PC-3 (cell line): ENCODE measurements at regions of chr12 and their contacts with region 1.

Region 1: DNA sequence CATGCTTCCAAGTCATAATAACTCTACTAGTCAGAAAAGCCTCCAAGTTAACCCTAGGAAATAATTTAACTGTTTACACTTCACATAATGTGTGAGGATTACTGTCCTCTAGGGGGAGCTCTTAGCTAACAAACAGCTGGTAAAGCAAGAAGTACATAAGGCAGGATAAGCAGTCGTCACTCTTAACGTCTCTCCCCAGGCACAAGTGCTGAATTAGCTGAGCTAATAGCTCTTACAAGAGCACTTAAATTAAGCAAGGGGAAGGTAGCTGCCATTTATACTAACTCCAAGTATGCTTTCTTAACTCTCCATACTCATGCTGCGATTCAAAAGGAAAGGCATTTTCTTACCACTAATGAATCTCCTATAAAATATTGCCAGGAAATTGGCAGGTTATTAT is 79.3 kb upstream of the TSPAN11 start:
- DNase-seq: peak; percentile 76
- ATAC-seq: peak; percentile 57
- H3K4me3 ChIP-seq: no peak overlapping the region
- H3K27ac ChIP-seq: no peak overlapping the region
- H3K4me1 ChIP-seq: no peaks in the 10 kb centered on the region; the same call in 1 of the 2 replicates
- H3K27me3 ChIP-seq: no peaks in the 10 kb centered on the region
- CTCF ChIP-seq: peak; percentile 74

Region 2: GRCh38 chr12:30679241-30679640 is 168.0 kb before region 1 on chr12:
- CTCF ChIA-PET with region 1: interaction called, 13 read pairs
- POLR2A ChIA-PET with region 1: no interaction called
- intact Hi-C with region 1: no loop called
- DNase-seq: no peak
- ATAC-seq: no peak
- H3K4me3 ChIP-seq: no peak overlapping the region
- H3K27ac ChIP-seq: no peak overlapping the region
- H3K4me1 ChIP-seq: no peaks in the 10 kb centered on the region
- H3K27me3 ChIP-seq: no peaks in the 10 kb centered on the region
- CTCF ChIP-seq: no peak

Region 3: GRCh38 chr12:30965613-30965985 is 118.3 kb after region 1 on chr12:
- CTCF ChIA-PET with region 1: no interaction called
- POLR2A ChIA-PET with region 1: no interaction called
- intact Hi-C with region 1: loop called (anchors 5 kb)
- DNase-seq: peak; percentile 45
- ATAC-seq: peak; percentile 67
- H3K4me3 ChIP-seq: no peak overlapping the region
- H3K27ac ChIP-seq: no peak overlapping the region
- H3K4me1 ChIP-seq: peaks cover 6% of the 10 kb centered on the region
- H3K27me3 ChIP-seq: no peaks in the 10 kb centered on the region
- CTCF ChIP-seq: peak; percentile 61

Region 4: DNA sequence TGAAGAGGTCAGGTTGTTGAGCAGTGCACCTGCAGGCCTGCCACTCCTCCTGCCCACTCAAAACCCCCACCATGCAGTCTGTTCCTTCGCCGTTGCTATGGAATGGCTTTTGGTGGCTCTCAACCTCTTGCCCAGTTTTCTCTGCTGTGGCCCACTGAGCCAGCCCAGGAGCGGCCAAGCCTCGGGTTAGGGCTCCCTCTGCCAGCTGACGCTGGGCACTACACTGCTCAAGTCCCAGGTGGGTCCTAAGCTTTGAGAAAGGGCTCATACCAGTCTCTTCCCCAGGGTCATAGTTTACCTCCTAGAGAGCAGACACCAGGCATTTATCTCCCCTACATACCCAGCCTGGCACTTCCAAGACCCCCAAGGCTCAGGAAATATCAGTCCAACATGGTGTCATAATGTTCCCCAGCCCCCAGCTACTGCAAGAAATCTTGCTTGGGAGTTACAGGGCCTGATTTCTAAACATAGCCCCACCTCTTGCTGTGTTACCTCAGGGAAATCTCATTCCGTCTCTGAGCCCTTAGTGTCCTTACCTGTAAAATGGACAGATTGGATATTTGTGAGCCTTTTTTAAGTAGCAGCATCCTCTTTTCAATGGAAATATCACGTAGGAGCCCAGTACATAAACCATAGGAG is 138.7 kb after region 1 on chr12:
- CTCF ChIA-PET with region 1: interaction called, 3 read pairs
- POLR2A ChIA-PET with region 1: no interaction called
- intact Hi-C with region 1: loop called (anchors 1 kb)
- DNase-seq: peak; percentile 69
- ATAC-seq: peak; percentile 62
- H3K4me3 ChIP-seq: no peak overlapping the region
- H3K27ac ChIP-seq: no peak overlapping the region
- H3K4me1 ChIP-seq: peaks cover 18% of the 10 kb centered on the region
- H3K27me3 ChIP-seq: no peaks in the 10 kb centered on the region
- CTCF ChIP-seq: peak; percentile 77

Region 5: DNA sequence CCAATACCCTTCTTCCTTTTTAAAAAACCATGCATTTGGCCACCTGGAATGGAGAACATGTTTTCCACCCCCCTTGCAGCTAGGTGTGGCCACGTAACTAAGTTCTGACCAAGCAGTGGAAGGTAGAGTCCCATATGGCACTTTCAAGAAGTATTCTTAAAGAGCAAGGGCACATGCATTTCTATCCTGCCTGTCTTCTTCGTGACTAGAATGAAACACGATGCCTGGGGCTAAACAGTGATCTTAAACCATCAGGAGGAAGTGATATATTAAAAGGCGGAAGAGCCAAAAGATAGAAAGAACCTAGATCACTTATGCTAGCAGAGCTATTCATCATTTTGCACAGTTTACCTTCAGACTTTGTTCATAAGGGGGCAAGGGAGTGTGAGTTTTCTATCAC is 210.4 kb after region 1 on chr12:
- CTCF ChIA-PET with region 1: interaction called, 4 read pairs
- POLR2A ChIA-PET with region 1: no interaction called
- intact Hi-C with region 1: loop called (anchors 1 kb)
- DNase-seq: no peak
- ATAC-seq: no peak
- H3K4me3 ChIP-seq: no peak overlapping the region
- H3K27ac ChIP-seq: no peak overlapping the region
- H3K4me1 ChIP-seq: peaks cover 10% of the 10 kb centered on the region
- H3K27me3 ChIP-seq: no peaks in the 10 kb centered on the region
- CTCF ChIP-seq: no peak

Region 6: DNA sequence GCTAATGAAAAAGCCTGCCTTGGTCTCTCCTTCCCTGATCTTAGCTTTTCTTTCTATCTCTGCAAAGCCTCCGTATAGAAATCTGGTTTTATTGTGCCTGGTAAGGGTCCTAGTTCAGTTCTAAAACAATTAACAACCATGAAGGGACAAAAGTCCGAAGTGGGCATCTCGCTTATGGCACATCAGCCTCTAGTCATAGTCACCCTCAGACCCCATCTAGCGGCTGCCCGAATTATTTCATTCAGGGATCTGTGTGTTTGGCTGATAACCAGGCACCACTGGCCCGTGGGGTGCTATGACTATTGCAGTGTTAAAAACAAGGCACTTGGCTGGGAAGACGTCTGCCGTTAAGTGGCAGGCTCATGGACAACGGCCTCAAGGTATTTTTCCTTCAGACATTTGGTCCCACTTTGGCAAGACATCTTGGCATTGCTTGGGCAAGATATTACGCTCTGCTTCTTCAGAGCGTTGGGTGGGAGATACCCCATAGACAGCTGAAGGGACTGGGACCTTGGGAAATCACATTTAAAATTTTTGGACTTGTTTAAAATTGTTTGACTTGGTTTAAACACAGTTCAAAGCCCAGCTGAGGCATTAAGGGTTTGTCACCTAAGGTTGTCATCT is 391.6 kb after region 1 on chr12:
- CTCF ChIA-PET with region 1: no interaction called
- POLR2A ChIA-PET with region 1: no interaction called
- intact Hi-C with region 1: loop called (anchors 2 kb)
- DNase-seq: peak; percentile 90
- ATAC-seq: peak; percentile 83
- H3K4me3 ChIP-seq: peak overlapping the region; percentile 41; the same call in 1 of the 2 replicates
- H3K27ac ChIP-seq: no peak overlapping the region
- H3K4me1 ChIP-seq: no peaks in the 10 kb centered on the region
- H3K27me3 ChIP-seq: peaks cover 25% of the 10 kb centered on the region
- CTCF ChIP-seq: peak; percentile 94